ENCODE measurements at regions of chr15 and their contacts with region 1.

Region 1: DNA sequence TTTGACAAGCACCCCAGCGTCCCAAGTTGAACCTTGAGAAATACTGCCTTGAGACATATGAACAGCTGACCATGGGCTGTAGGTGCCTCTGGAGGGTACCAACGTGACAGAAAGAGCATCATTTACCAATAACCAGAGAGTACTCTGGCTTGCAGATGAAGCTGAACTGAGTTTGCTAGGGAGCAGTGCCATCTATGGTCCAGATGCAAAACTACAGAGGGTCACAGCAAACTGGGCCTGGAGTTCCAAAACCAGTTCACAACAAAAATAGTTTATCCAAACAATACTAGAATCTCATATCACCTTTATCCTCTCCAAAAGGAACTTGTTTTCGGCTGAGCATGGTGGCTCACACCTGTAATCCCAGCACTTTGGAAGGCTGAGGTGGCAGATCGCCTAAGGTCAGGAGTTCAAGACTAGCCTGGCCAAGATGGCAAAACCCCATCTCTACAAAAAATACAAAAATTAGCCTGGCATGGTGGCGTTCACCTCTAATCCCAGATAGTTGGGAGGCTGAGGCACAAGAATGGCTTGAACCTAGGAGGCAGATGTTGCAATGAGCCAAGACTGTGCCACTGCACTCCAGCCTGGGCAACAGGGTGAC is 69.3 kb downstream of the CHAC1 start:
- DNase-seq: peak; percentile 61
- H3K4me3 ChIP-seq: no peak overlapping the region; a peak in 1 of 4 replicates
- H3K27ac ChIP-seq: no peak overlapping the region
- H3K4me1 ChIP-seq: peaks cover 2 to 23% of the 10 kb centered on the region in 2 experiments; a peak in 3 of 4 replicates
- H3K27me3 ChIP-seq: no peaks in the 10 kb centered on the region
- CTCF ChIP-seq: peak; percentile 83
- EP300 ChIP-seq: no peak
- RAD21 ChIP-seq: peak; percentile 91

Region 2: GRCh38 chr15:40825661-40826088 is 196.9 kb before region 1 on chr15:
- CTCF ChIA-PET with region 1: no interaction called
- POLR2A ChIA-PET with region 1: no interaction called
- DNase-seq: no peak
- H3K4me3 ChIP-seq: no peak overlapping the region
- H3K27ac ChIP-seq: no peak overlapping the region
- H3K4me1 ChIP-seq: no peaks in the 10 kb centered on the region; a peak in 1 of 4 replicates
- H3K27me3 ChIP-seq: no peaks in the 10 kb centered on the region
- CTCF ChIP-seq: no peak
- EP300 ChIP-seq: no peak
- RAD21 ChIP-seq: no peak

Region 3: GRCh38 chr15:41011055-41011815 is 11.4 kb before region 1 on chr15:
- CTCF ChIA-PET with region 1: interaction called, 15 read pairs
- POLR2A ChIA-PET with region 1: interaction called, 3 read pairs
- DNase-seq: no peak
- H3K4me3 ChIP-seq: no peak overlapping the region
- H3K27ac ChIP-seq: peak overlapping the region in 1 of 2 experiments; percentile 14; a peak in 2 of 4 replicates
- H3K4me1 ChIP-seq: peaks cover 3 to 12% of the 10 kb centered on the region in 2 experiments
- H3K27me3 ChIP-seq: no peaks in the 10 kb centered on the region
- CTCF ChIP-seq: no peak
- EP300 ChIP-seq: no peak
- RAD21 ChIP-seq: no peak

Measured in SK-N-SH (cell line).